ENCODE measurements at regions of chr21 and their contacts with region 1.

Region 1: DNA sequence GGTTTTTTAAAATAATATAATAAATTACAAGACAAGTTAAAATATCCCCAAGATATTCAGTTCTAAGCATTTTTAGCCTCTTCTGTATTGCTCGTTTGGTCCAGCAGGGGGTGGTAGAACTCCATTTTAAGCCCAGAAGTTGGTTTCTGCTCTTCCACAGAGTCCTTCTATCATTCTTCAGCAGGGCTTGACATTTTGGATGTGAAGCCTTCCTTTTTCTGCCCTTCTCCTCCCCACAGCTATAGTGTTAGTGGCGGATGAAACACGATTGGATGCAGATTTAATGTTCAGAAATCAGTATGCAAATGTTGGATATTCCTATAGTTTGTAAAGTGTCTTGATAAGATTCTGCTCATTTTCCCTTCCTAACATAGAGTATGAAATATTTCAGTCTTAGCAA is 1.4 kb downstream of the NCAM2 start:
- DNase-seq: peak in 1 of 5 donors; percentile 22
- ATAC-seq: peak in 3 of 4 donors; percentile 52 to 71 (median 64)
- H3K4me3 ChIP-seq: peak overlapping the region in 7 of 12 donors; percentile 15 to 76 (median 61)
- H3K27ac ChIP-seq: peak overlapping the region in 2 of 12 donors; percentile 28 to 31
- H3K4me1 ChIP-seq: peaks cover 0 to 24% (median 6%) of the 10 kb centered on the region in 12 donors
- H3K27me3 ChIP-seq: peaks cover 0 to 24% (median 9%) of the 10 kb centered on the region in 9 donors
- CTCF ChIP-seq: peak; percentile 48 to 78 (median 65)
- POLR2A ChIP-seq: no peak

Region 2: DNA sequence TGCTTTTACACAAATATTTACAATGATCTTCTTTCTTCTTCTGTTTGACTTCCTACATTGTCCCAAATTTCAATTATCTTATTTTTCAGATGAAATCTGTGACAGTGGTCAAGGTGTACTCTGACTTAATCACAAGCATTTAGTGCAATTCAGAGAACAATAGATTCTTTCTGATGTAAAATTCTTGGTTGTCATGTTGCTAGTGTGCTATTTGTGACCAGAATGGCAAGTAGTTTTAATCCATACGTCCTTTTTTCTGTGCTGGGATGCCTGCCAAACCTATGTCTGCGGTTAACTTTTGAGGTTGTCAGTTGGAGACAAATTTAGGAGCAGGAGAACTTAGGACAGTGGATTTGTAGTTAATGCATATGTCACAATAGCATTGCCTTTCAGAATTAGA is 29.5 kb after region 1 on chr21:
- intact Hi-C with region 1: no loop called
- DNase-seq: no peak
- ATAC-seq: no peak
- H3K4me3 ChIP-seq: no peak overlapping the region
- H3K27ac ChIP-seq: no peak overlapping the region
- H3K4me1 ChIP-seq: peaks cover 0 to 4% (median 0%) of the 10 kb centered on the region in 12 donors
- H3K27me3 ChIP-seq: no peaks in the 10 kb centered on the region
- CTCF ChIP-seq: no peak
- POLR2A ChIP-seq: no peak

Region 3: DNA sequence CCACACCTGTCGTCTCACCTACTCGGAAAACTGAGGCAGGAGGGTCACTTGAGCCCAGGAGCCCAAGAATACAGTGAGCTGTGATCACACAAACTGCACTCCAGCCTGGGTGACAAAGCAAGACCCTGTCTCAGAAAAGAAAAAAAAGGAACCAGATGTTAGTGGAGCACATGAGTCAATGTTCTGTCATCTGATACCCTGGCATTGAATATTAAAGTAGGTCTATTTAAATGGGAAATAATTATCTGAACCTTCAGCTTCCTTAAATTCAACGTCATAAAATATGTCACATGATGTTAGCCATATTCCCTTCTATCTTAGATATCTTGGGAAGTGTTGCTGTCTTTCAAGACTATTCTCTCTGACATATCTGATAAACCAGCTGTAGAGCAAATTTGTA is 45.9 kb after region 1 on chr21:
- intact Hi-C with region 1: no loop called
- DNase-seq: no peak
- ATAC-seq: no peak
- H3K4me3 ChIP-seq: no peak overlapping the region
- H3K27ac ChIP-seq: no peak overlapping the region
- H3K4me1 ChIP-seq: peaks cover 0 to 5% (median 0%) of the 10 kb centered on the region in 12 donors
- H3K27me3 ChIP-seq: no peaks in the 10 kb centered on the region
- CTCF ChIP-seq: no peak
- POLR2A ChIP-seq: no peak

Region 4: DNA sequence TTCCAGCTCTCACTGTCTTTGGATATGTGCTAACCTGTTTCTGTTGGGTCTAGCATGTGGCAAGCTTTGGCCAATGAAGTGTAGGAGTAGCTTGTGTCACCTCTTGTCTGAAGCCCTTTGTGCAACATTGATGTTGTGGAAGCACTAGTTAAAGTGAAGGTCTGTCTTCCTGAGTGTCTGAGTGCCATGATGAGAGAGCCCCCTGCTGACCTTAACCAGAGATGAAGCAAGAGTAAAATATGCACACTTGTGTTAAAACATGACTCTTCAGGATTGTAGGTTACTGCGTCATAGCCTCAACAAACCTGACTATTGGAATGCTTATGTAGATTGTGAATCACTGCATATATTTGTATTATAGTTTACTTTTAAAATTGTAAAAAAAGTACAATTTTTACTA is 102.3 kb after region 1 on chr21:
- intact Hi-C with region 1: loop called in 4 of 10 experiments (anchors 5 kb)
- DNase-seq: no peak
- ATAC-seq: peak in 2 of 4 donors; percentile 45 to 59
- H3K4me3 ChIP-seq: no peak overlapping the region
- H3K27ac ChIP-seq: no peak overlapping the region
- H3K4me1 ChIP-seq: no peaks in the 10 kb centered on the region
- H3K27me3 ChIP-seq: no peaks in the 10 kb centered on the region
- CTCF ChIP-seq: peak in 8 of 12 donors; percentile 6 to 42 (median 29)
- POLR2A ChIP-seq: no peak

Region 5: DNA sequence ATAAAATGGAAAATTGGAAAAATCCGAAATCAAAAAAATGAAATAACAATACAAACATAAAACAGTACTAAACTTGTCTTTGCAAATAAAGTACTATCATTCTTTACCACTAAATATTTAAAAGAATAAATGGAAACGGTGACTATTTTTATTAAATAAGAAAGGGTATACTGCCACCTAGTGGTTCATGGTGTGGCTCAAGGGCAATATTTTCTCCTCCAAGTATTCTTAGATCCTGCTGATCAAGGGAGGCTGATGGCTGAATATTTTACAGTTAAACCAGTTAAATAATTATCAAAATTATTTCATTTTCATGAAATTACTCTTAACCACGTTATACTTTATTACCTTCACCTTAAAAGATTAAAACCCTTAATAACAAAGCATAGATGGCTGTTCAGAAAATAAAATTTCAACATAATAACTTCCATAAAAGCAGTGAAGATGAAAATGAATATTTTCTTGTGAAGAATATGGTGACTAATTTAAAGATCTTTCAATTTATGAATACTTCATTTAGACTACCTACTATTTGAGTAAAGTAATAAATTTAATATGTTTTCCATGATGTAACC is 1792.4 kb after region 1 on chr21:
- intact Hi-C with region 1: loop called in 5 of 10 experiments (anchors 2 to 10 kb)
- DNase-seq: no peak
- ATAC-seq: no peak
- H3K4me3 ChIP-seq: no peak overlapping the region
- H3K27ac ChIP-seq: no peak overlapping the region
- H3K4me1 ChIP-seq: no peaks in the 10 kb centered on the region
- H3K27me3 ChIP-seq: no peaks in the 10 kb centered on the region
- CTCF ChIP-seq: peak; percentile 68 to 90 (median 81)
- POLR2A ChIP-seq: no peak